ENCODE measurements at regions of chr1 and their contacts with region 1.

Region 1: DNA sequence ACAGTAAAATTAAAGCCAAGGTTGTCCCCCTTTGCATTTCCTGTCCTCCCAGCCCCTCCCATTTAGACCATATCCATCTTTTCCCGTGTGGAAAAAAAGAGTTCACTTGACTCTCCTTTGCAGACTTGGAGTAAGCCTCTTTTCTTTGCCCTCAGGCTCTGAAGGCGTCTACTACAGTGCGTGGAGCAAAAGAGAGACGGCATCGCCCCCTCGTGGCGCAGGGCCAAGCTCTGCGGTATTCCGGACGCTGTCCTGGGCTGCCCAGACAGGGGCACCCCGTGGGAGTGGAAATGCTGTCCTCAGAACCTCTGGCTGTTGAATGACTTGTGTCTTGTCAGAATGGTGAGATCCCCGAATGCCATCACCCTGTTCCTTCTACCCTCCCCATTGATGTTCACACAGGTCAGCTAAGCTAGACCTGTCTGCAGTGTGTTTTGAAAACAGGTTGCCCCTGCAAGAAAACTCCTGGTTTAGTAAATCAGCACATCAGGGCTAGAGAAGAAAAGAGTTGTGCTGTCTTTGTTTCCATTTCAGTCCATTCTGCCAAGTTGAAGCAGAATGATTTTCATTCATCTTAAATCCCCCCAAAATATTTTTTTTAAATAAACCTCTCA is 12.3 kb upstream of the GJA8 start:
- DNase-seq: peak; percentile 16 to 74 (median 58)
- ATAC-seq: peak; percentile 48
- H3K4me3 ChIP-seq: no peak overlapping the region
- H3K4me3 Mint-ChIP-seq: no peak overlapping the region
- H3K27ac ChIP-seq: no peak overlapping the region
- H3K27ac Mint-ChIP-seq: no peak overlapping the region
- H3K4me1 ChIP-seq: no peaks in the 10 kb centered on the region
- H3K4me1 Mint-ChIP-seq: no peaks in the 10 kb centered on the region
- H3K27me3 ChIP-seq: no peaks in the 10 kb centered on the region
- H3K27me3 Mint-ChIP-seq: peaks cover 2% of the 10 kb centered on the region
- CTCF ChIP-seq: peak; percentile 41

Region 2: GRCh38 chr1:147273409-147274336 is 616.6 kb before region 1 on chr1:
- CTCF ChIA-PET with region 1: interaction called, 3 read pairs
- POLR2A ChIA-PET with region 1: no interaction called
- intact Hi-C with region 1: loop called (anchors 1 kb)
- DNase-seq: peak in 5 of 9 experiments; percentile 1 to 65 (median 15)
- ATAC-seq: peak; percentile 66
- H3K4me3 ChIP-seq: no peak overlapping the region
- H3K4me3 Mint-ChIP-seq: no peak overlapping the region
- H3K27ac ChIP-seq: no peak overlapping the region
- H3K27ac Mint-ChIP-seq: no peak overlapping the region
- H3K4me1 ChIP-seq: no peaks in the 10 kb centered on the region
- H3K4me1 Mint-ChIP-seq: peaks cover 4% of the 10 kb centered on the region
- H3K27me3 ChIP-seq: no peaks in the 10 kb centered on the region
- H3K27me3 Mint-ChIP-seq: no peaks in the 10 kb centered on the region
- CTCF ChIP-seq: peak; percentile 67

Region 3: DNA sequence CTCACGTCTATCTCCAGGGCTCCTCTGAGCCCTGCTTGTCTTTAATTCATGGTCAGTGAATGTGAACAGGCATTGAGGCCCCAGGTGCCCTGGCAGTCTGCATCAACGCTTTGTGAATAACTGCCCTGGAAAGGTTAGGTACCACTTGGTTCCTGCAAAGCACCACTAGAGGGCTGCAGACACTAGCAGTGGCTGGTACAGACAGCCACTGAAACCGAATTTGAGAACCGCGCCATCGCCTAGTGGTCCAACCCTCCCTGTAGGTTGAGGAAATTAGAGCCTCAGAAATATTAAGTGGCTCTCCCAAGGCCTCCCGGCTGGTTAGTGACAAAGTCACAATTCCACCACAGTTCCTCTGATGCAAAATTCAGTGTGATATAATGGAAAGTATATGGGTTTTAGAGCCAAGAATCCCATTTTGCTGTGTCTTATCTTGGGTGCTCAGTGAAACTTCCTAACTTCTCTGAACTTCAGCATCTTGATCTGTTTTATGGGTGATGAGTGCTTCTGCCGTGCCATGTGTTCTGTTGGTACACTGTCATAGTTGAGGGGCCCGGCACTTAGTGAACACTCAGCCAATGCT is 395.2 kb before region 1 on chr1:
- CTCF ChIA-PET with region 1: interaction called, 20 read pairs
- POLR2A ChIA-PET with region 1: no interaction called
- intact Hi-C with region 1: loop called (anchors 1 kb)
- DNase-seq: peak; percentile 31 to 82 (median 72)
- ATAC-seq: peak; percentile 96
- H3K4me3 ChIP-seq: no peak overlapping the region
- H3K4me3 Mint-ChIP-seq: no peak overlapping the region
- H3K27ac ChIP-seq: no peak overlapping the region
- H3K27ac Mint-ChIP-seq: no peak overlapping the region
- H3K4me1 ChIP-seq: no peaks in the 10 kb centered on the region
- H3K4me1 Mint-ChIP-seq: peaks cover 4% of the 10 kb centered on the region
- H3K27me3 ChIP-seq: no peaks in the 10 kb centered on the region
- H3K27me3 Mint-ChIP-seq: peaks cover 9% of the 10 kb centered on the region
- CTCF ChIP-seq: peak; percentile 96

Region 4: DNA sequence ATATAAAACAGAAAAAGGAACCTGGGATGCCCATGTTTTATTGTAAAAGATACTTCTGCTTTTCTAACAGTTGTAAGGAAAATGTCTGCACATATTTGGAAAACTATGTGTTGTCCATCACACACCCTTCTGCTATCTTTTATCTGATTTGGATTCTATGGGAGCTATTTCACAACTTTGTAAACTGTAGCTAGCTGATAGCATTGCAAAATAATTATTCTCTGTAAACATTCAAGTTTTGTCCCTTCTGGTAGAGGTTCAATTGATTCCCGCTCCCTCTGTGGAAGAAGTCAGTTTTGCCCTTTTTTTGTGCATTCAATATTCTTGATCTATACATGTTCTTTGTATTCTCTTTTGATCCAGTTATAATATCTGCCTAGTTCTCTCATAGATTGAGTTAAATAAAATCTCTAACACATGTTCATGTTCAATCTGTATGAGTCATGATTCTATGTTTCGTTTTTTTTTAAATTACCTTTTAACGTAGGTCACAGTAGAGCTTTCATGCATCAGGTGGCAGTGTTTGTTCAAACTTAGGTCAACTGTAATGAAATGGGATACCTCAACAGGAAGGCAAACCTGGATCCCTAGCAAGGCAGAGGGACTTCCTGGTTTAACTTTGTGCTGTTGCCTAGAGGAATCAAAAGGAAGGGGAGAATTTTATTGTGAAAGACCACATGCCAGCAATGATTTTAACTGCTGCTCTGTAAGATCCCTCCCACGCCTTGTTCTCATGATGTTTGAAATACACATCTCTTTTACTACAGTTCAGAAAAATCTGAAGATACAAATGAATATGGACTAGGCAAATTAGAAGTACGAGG is 375.0 kb before region 1 on chr1:
- CTCF ChIA-PET with region 1: interaction called, 9 read pairs
- POLR2A ChIA-PET with region 1: no interaction called
- intact Hi-C with region 1: loop called in 1 of 2 experiments (anchors 5 kb)
- DNase-seq: peak in 2 of 9 experiments; percentile 47 to 60
- ATAC-seq: peak; percentile 65
- H3K4me3 ChIP-seq: no peak overlapping the region
- H3K4me3 Mint-ChIP-seq: no peak overlapping the region
- H3K27ac ChIP-seq: no peak overlapping the region
- H3K27ac Mint-ChIP-seq: no peak overlapping the region
- H3K4me1 ChIP-seq: no peaks in the 10 kb centered on the region
- H3K4me1 Mint-ChIP-seq: peaks cover 4% of the 10 kb centered on the region
- H3K27me3 ChIP-seq: no peaks in the 10 kb centered on the region
- H3K27me3 Mint-ChIP-seq: peaks cover 9% of the 10 kb centered on the region
- CTCF ChIP-seq: peak; percentile 33

Region 5: DNA sequence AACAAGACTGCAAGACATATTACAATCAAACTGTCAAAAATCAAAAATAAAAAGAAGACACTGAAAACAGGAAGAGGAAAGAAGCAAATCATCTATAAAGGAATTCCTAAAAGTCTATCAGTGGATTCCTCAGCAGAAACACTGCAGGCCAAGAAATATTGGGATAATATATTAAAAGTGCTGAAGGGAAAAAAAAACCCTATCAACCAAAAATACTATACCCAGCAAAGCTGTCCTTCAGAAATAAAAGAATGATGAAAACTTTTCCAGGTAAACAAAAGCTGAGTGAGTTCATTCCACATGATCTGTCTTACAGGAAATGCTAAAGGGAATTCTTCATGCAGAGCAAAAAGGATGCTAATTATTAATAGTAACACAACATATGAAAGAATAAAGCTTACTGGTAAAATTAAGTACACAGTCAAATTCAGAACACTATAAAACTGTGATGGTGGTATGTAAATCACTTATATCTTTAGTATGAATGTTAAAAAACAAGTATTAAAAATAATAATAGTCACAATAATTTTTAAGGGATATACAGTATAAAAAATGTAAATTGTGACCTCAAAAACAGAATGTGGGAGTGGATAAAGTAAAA is 207.0 kb before region 1 on chr1:
- CTCF ChIA-PET with region 1: no interaction called
- POLR2A ChIA-PET with region 1: no interaction called
- intact Hi-C with region 1: no loop called
- DNase-seq: no peak
- ATAC-seq: no peak
- H3K4me3 ChIP-seq: no peak overlapping the region
- H3K4me3 Mint-ChIP-seq: no peak overlapping the region
- H3K27ac ChIP-seq: no peak overlapping the region
- H3K27ac Mint-ChIP-seq: no peak overlapping the region
- H3K4me1 ChIP-seq: no peaks in the 10 kb centered on the region
- H3K4me1 Mint-ChIP-seq: no peaks in the 10 kb centered on the region
- H3K27me3 ChIP-seq: no peaks in the 10 kb centered on the region
- H3K27me3 Mint-ChIP-seq: peaks cover 6% of the 10 kb centered on the region
- CTCF ChIP-seq: no peak

Region 6: GRCh38 chr1:147700042-147701006 is 190.0 kb before region 1 on chr1:
- CTCF ChIA-PET with region 1: interaction called, 12 read pairs
- POLR2A ChIA-PET with region 1: interaction called, 3 read pairs
- intact Hi-C with region 1: loop called in 1 of 2 experiments (anchors 2 kb)
- DNase-seq: peak; percentile 25 to 76 (median 61)
- ATAC-seq: peak; percentile 89
- H3K4me3 ChIP-seq: no peak overlapping the region
- H3K4me3 Mint-ChIP-seq: peak overlapping the region; percentile 19
- H3K27ac ChIP-seq: no peak overlapping the region
- H3K27ac Mint-ChIP-seq: peak overlapping the region; percentile 1
- H3K4me1 ChIP-seq: no peaks in the 10 kb centered on the region
- H3K4me1 Mint-ChIP-seq: peaks cover 6% of the 10 kb centered on the region
- H3K27me3 ChIP-seq: no peaks in the 10 kb centered on the region
- H3K27me3 Mint-ChIP-seq: peaks cover 17% of the 10 kb centered on the region
- CTCF ChIP-seq: peak; percentile 71

Region 7: GRCh38 chr1:147723691-147724323 is 166.5 kb before region 1 on chr1:
- CTCF ChIA-PET with region 1: interaction called, 57 read pairs
- POLR2A ChIA-PET with region 1: interaction called, 5 read pairs
- intact Hi-C with region 1: loop called (anchors 1 kb)
- DNase-seq: peak in 7 of 9 experiments; percentile 10 to 57 (median 24)
- ATAC-seq: no peak
- H3K4me3 ChIP-seq: no peak overlapping the region
- H3K4me3 Mint-ChIP-seq: no peak overlapping the region
- H3K27ac ChIP-seq: no peak overlapping the region
- H3K27ac Mint-ChIP-seq: no peak overlapping the region
- H3K4me1 ChIP-seq: no peaks in the 10 kb centered on the region
- H3K4me1 Mint-ChIP-seq: no peaks in the 10 kb centered on the region
- H3K27me3 ChIP-seq: peaks cover 0 to 5% of the 10 kb centered on the region in 2 experiments
- H3K27me3 Mint-ChIP-seq: peaks cover 22% of the 10 kb centered on the region
- CTCF ChIP-seq: peak; percentile 36

Region 8: GRCh38 chr1:147902183-147902845 is 12.0 kb after region 1 on chr1 and contains the start of gene GJA8:
- CTCF ChIA-PET with region 1: interaction called, 53 read pairs
- POLR2A ChIA-PET with region 1: no interaction called
- intact Hi-C with region 1: no loop called
- DNase-seq: no peak
- ATAC-seq: no peak
- H3K4me3 ChIP-seq: no peak within 1 kb of the TSS
- H3K4me3 Mint-ChIP-seq: no peak within 1 kb of the TSS
- H3K27ac ChIP-seq: no peak within 1 kb of the TSS
- H3K27ac Mint-ChIP-seq: no peak within 1 kb of the TSS
- H3K4me1 ChIP-seq: no peaks in the 10 kb centered on the region
- H3K4me1 Mint-ChIP-seq: peaks cover 5% of the 10 kb centered on the region
- H3K27me3 ChIP-seq: no peaks in the 10 kb centered on the region
- H3K27me3 Mint-ChIP-seq: no peaks in the 10 kb centered on the region
- CTCF ChIP-seq: no peak
- total RNA-seq, gene GJA8: not detected